ENCODE measurements at regions of chr4 and their contacts with region 1.

Region 1: DNA sequence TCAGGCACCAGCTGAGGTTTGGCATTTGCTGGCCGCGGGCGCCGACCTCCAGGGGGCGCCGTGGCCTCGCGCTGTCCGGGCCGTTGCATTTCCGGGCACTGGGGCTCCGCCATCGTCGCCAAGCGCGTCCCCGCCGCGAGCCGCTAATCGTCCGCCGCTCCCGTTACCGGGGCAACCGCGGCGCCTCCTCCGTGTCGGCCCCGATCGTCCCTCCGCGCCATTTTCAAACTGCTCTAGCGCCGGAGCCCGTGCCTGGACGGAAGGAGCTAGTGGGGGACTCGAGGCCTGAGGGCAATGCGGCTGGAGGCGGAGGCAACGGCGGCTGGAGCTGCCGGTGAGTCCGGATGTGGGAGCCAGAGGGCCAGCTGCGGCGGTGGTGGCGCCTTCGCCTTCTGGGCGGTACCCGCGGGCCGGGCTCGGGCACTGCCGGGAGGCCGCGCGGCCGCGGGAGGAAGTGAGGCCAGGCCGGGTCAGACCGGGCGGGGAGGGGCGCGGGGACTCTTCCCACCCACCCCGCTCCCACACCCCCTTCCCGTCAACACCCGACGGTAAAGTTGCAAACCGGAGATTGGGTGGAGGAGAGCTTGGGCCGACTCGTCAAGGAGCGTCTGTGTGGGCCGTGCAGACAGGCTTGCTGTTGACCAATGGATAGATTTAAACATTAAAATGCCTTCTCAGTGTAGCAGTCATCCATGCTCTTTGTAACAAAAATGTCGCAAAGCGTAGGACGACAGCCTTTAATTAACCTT is at the start of gene CEP135:
- DNase-seq: peak; percentile 58 to 89
- ATAC-seq: peak; percentile 93
- H3K4me3 ChIP-seq: peak within 1 kb of the TSS; percentile 84
- H3K27ac ChIP-seq: peak within 1 kb of the TSS; percentile 94 to 99
- H3K4me1 ChIP-seq: peaks cover 17% of the 10 kb centered on the region
- CTCF ChIP-seq: peak; percentile 80
- EP300 ChIP-seq: no peak
- POLR2A ChIP-seq: peak; percentile 46
- RAD21 ChIP-seq: peak; percentile 48 to 72
- polyA plus RNA-seq, gene CEP135: 5.7 and 10.6 TPM in 2 replicates

Region 2: GRCh38 chr4:55768291-55768690 is 180.6 kb before region 1 on chr4:
- CTCF ChIA-PET with region 1: no interaction called
- POLR2A ChIA-PET with region 1: no interaction called
- DNase-seq: peak in 1 of 2 experiments; percentile 11
- ATAC-seq: no peak
- H3K4me3 ChIP-seq: no peak overlapping the region
- H3K27ac ChIP-seq: no peak overlapping the region
- H3K4me1 ChIP-seq: no peaks in the 10 kb centered on the region
- CTCF ChIP-seq: no peak
- EP300 ChIP-seq: no peak
- POLR2A ChIP-seq: no peak
- RAD21 ChIP-seq: no peak

Region 3: GRCh38 chr4:55904576-55904975 is 44.3 kb before region 1 on chr4:
- CTCF ChIA-PET with region 1: interaction called, 11 read pairs
- POLR2A ChIA-PET with region 1: interaction called, 3 read pairs
- DNase-seq: no peak
- ATAC-seq: no peak
- H3K4me3 ChIP-seq: no peak overlapping the region
- H3K27ac ChIP-seq: no peak overlapping the region
- H3K4me1 ChIP-seq: peaks cover 9% of the 10 kb centered on the region; the same call in 2 of the 3 replicates
- CTCF ChIP-seq: no peak
- EP300 ChIP-seq: no peak
- POLR2A ChIP-seq: no peak
- RAD21 ChIP-seq: no peak

Region 4: GRCh38 chr4:55933611-55934010 is 15.3 kb before region 1 on chr4:
- CTCF ChIA-PET with region 1: interaction called, 11 read pairs
- POLR2A ChIA-PET with region 1: interaction called, 6 read pairs
- DNase-seq: no peak
- ATAC-seq: no peak
- H3K4me3 ChIP-seq: no peak overlapping the region
- H3K27ac ChIP-seq: no peak overlapping the region
- H3K4me1 ChIP-seq: no peaks in the 10 kb centered on the region
- CTCF ChIP-seq: no peak
- EP300 ChIP-seq: no peak
- POLR2A ChIP-seq: no peak
- RAD21 ChIP-seq: no peak

Region 5: GRCh38 chr4:55959655-55960054 is 10.8 kb after region 1 on chr4:
- CTCF ChIA-PET with region 1: interaction called, 24 read pairs
- POLR2A ChIA-PET with region 1: interaction called, 4 read pairs
- DNase-seq: no peak
- ATAC-seq: no peak
- H3K4me3 ChIP-seq: no peak overlapping the region
- H3K27ac ChIP-seq: no peak overlapping the region
- H3K4me1 ChIP-seq: peaks cover 4% of the 10 kb centered on the region; the same call in 1 of the 3 replicates
- CTCF ChIP-seq: no peak
- EP300 ChIP-seq: no peak
- POLR2A ChIP-seq: no peak
- RAD21 ChIP-seq: no peak

Region 6: DNA sequence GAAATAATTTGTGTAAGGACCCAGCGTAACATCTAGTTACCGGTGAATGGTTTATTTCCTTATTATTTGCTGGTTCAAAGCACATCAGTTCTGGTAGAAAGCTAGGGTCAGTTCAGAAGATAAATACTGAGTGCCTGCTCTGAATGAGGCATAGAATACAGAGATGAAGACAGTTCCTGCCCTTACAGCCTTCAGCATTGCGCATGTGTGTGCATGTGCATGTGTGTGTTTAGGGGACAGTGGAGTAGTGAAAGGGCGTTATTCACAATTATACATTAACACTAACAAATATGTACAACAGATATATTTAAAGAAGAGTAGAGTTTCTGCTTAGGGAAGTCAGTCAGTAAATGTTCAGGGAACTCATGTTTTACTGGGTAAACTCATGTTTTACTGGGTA is 28.9 kb after region 1 on chr4:
- CTCF ChIA-PET with region 1: interaction called, 10 read pairs
- POLR2A ChIA-PET with region 1: no interaction called
- DNase-seq: no peak
- ATAC-seq: no peak
- H3K4me3 ChIP-seq: no peak overlapping the region
- H3K27ac ChIP-seq: no peak overlapping the region
- H3K4me1 ChIP-seq: no peaks in the 10 kb centered on the region
- CTCF ChIP-seq: no peak
- EP300 ChIP-seq: no peak
- POLR2A ChIP-seq: no peak
- RAD21 ChIP-seq: no peak

Region 7: DNA sequence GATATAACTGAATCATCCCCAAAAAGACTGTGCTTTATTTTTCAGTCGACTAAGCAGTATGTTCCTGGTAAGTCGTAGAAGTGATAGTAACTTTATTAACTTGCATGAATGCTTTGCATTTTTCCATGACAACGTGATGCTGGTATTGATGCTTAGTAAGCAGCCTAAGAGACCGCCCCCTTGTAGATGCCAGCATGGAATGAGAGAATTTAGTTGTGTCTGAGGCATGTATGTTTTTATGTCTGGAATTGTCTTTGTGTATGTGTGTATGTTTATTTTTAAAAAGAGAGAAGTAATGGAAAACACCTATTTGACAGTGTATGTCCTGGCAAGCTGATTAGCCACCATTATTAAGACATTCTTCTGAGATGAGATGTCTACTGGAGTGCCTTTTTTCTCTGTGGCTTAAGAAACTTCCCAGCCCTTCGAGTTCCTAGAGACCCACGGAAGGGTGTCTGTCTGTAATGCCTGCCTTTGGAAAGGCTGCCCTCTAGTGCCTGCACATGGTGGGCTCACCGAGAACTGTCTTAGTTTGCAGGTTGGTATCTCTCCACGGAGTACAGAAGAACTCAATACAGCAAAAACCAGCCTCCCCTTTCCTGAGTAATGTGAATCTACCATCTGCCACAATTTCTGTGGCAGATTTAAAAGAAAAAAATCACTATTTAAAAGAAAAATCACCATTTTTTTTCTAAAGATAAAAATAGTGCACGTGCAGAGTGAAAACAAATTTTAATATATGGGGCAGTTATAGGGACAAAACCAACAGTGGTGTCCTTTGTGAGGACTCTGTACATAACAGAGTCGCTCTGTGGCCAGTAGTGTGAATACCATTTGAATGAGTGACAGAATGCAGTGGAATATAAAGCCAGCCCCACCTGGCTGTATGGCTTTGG is 352.5 kb after region 1 on chr4:
- CTCF ChIA-PET with region 1: interaction called, 14 read pairs
- POLR2A ChIA-PET with region 1: no interaction called
- DNase-seq: peak; percentile 38 to 75
- ATAC-seq: peak; percentile 99 to 100
- H3K4me3 ChIP-seq: no peak overlapping the region
- H3K27ac ChIP-seq: no peak overlapping the region
- H3K4me1 ChIP-seq: no peaks in the 10 kb centered on the region
- CTCF ChIP-seq: peak; percentile 77
- EP300 ChIP-seq: no peak
- POLR2A ChIP-seq: no peak
- RAD21 ChIP-seq: peak; percentile 82 to 91

Region 8: DNA sequence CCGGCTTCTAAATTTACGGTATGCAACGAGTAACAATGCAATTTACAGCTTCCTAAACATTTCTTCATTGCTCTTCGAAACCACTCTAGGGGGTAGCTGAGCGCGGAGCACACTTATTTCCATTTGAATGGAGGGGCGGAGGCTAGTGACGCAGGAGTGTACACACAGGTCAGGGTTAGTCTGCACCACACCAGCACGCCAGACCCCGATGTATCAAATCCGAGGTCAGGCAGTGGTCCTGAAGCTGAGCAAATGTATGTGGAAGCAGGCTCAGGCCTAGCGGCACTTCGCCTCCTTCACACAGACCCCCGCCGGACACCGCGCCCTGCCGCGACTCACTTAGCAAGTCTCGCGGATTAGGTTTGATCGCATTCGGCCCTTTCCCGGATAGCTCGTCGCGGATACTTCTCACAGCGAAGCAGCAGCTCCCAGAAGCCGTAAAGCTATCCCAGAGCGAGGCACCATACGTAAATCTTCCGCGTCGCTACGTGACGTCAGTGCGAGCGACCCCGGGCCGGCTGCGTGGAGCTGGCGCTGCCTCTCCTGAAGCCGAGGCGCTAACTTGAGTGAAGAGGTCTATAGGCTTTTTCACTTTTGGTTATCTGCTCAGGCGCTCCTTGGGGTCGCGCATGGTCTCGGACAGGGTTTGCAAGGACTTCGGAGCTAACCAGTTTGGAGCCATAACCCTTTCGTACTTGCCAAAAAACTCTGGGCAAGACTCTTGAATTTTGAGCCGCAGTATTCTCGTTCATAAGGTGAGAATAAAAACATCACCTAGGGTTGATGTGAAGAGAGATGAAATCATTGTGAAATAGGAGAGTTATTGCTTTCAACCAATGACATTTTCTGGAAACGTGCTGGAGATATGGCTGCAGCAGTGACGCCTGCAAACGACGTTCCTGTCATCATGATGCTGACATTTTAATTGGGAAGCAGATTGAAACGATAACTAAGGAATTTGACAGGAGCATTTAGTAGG is 438.4 kb after region 1 on chr4 and contains the start of gene AASDH:
- CTCF ChIA-PET with region 1: no interaction called
- POLR2A ChIA-PET with region 1: interaction called, 11 read pairs
- DNase-seq: peak; percentile 72 to 94
- ATAC-seq: peak; percentile 95 to 99
- H3K4me3 ChIP-seq: peak within 1 kb of the TSS; percentile 81
- H3K27ac ChIP-seq: peak within 1 kb of the TSS; percentile 92 to 97
- H3K4me1 ChIP-seq: peaks cover 4% of the 10 kb centered on the region; the same call in 1 of the 3 replicates
- CTCF ChIP-seq: no peak
- EP300 ChIP-seq: no peak
- POLR2A ChIP-seq: peak; percentile 71
- RAD21 ChIP-seq: no peak
- polyA plus RNA-seq, gene AASDH: 11.1 and 12.2 TPM in 2 replicates

Measured in A549 (cell line).